Natural killer cell (primary cell): ENCODE measurements at regions of chr1 and their contacts with region 1.

Region 1: DNA sequence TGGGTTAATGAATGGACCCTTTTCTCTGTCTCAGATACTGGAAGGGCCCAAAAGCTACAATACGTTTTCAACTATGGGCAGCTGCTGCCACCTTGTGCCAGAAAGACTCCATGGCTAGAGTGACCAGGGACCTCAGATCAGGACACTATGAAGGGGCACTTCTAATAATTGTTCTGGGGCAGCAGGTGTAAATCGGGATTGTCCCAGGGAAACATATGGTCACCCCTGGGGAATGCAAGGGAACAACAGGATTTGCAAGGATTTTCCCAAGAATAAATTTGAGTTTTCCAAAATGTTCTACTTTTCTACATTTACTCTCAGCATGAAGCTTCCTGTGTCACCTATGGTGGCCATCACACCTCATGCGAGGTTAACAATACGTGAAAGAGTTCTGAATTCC is 12.0 kb upstream of the FCAMR start:
- DNase-seq: peak; percentile 52 to 78
- ATAC-seq: peak; percentile 71 to 89 (median 86)
- H3K4me3 ChIP-seq: no peak overlapping the region
- H3K4me3 Mint-ChIP-seq: no peak overlapping the region
- H3K27ac ChIP-seq: no peak overlapping the region
- H3K27ac Mint-ChIP-seq: no peak overlapping the region
- H3K4me1 ChIP-seq: no peaks in the 10 kb centered on the region
- H3K4me1 Mint-ChIP-seq: no peaks in the 10 kb centered on the region
- H3K27me3 ChIP-seq: no peaks in the 10 kb centered on the region
- H3K27me3 Mint-ChIP-seq: peaks cover 24 to 31% of the 10 kb centered on the region in 2 donors
- CTCF ChIP-seq: peak; percentile 66

Region 2: GRCh38 chr1:206635080-206635977 is 346.9 kb before region 1 on chr1 and contains the start of gene DYRK3:
- intact Hi-C with region 1: loop called (anchors 1 kb)
- DNase-seq: peak; percentile 78 to 94
- ATAC-seq: peak; percentile 94 to 96 (median 95)
- H3K4me3 ChIP-seq: peak within 1 kb of the TSS; percentile 48
- H3K4me3 Mint-ChIP-seq: peak within 1 kb of the TSS; percentile 92
- H3K27ac ChIP-seq: no peak within 1 kb of the TSS
- H3K27ac Mint-ChIP-seq: peak within 1 kb of the TSS; percentile 56 to 79
- H3K4me1 ChIP-seq: peaks cover 17% of the 10 kb centered on the region
- H3K4me1 Mint-ChIP-seq: peaks cover 10 to 21% of the 10 kb centered on the region in 2 donors
- H3K27me3 ChIP-seq: peaks cover 8% of the 10 kb centered on the region
- H3K27me3 Mint-ChIP-seq: peaks cover 20 to 31% of the 10 kb centered on the region in 2 donors
- CTCF ChIP-seq: no peak
- total RNA-seq, gene DYRK3: 0.16 to 0.66 (median 0.43) TPM

Region 3: GRCh38 chr1:206725109-206725963 is 256.9 kb before region 1 on chr1:
- intact Hi-C with region 1: loop called (anchors 2 kb)
- DNase-seq: peak; percentile 55 to 82
- ATAC-seq: peak; percentile 36 to 54 (median 54)
- H3K4me3 ChIP-seq: no peak overlapping the region
- H3K4me3 Mint-ChIP-seq: no peak overlapping the region
- H3K27ac ChIP-seq: no peak overlapping the region
- H3K27ac Mint-ChIP-seq: no peak overlapping the region
- H3K4me1 ChIP-seq: peaks cover 67% of the 10 kb centered on the region
- H3K4me1 Mint-ChIP-seq: peaks cover 63 to 83% of the 10 kb centered on the region in 2 donors
- H3K27me3 ChIP-seq: no peaks in the 10 kb centered on the region
- H3K27me3 Mint-ChIP-seq: no peaks in the 10 kb centered on the region
- CTCF ChIP-seq: peak; percentile 55

Region 4: GRCh38 chr1:206734499-206735142 is 247.6 kb before region 1 on chr1:
- intact Hi-C with region 1: loop called (anchors 2 kb)
- DNase-seq: peak; percentile 74 to 90
- ATAC-seq: peak; percentile 49 to 63 (median 63)
- H3K4me3 ChIP-seq: no peak overlapping the region
- H3K4me3 Mint-ChIP-seq: peak overlapping the region; percentile 17
- H3K27ac ChIP-seq: no peak overlapping the region
- H3K27ac Mint-ChIP-seq: peak overlapping the region; percentile 66 to 92
- H3K4me1 ChIP-seq: peaks cover 66% of the 10 kb centered on the region
- H3K4me1 Mint-ChIP-seq: peaks cover 63 to 68% of the 10 kb centered on the region in 2 donors
- H3K27me3 ChIP-seq: no peaks in the 10 kb centered on the region
- H3K27me3 Mint-ChIP-seq: no peaks in the 10 kb centered on the region
- CTCF ChIP-seq: peak; percentile 84

Region 5: DNA sequence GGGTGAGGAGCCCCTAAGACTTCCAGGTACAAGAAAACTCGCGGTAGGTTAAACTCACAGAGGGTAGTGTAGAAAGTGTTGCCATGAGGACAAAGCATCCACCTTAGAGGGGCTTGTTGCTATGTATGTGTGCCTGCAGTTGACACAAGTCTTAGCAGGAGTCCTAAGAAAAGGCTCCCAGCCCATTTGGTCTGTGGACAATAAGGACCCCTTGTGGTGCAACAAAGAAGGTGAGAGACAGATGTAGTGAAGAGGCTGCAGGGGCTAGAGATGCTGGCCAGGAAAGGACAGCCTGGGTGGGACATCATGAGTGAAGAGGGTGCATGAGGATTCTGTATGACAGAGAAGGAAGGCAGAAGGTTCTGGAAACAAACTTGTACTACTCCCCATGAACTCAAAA is 173.6 kb before region 1 on chr1:
- intact Hi-C with region 1: loop called (anchors 1 kb)
- DNase-seq: peak in 1 of 2 donors; percentile 85
- ATAC-seq: peak; percentile 73 to 89 (median 86)
- H3K4me3 ChIP-seq: no peak overlapping the region
- H3K4me3 Mint-ChIP-seq: no peak overlapping the region
- H3K27ac ChIP-seq: no peak overlapping the region
- H3K27ac Mint-ChIP-seq: no peak overlapping the region
- H3K4me1 ChIP-seq: peaks cover 6% of the 10 kb centered on the region
- H3K4me1 Mint-ChIP-seq: peaks cover 0 to 12% of the 10 kb centered on the region in 2 donors
- H3K27me3 ChIP-seq: no peaks in the 10 kb centered on the region
- H3K27me3 Mint-ChIP-seq: peaks cover 8 to 26% of the 10 kb centered on the region in 2 donors
- CTCF ChIP-seq: peak; percentile 42

Region 6: GRCh38 chr1:206865013-206865671 is 117.1 kb before region 1 on chr1 and contains the start of gene IL20:
- intact Hi-C with region 1: loop called (anchors 1 kb)
- DNase-seq: peak; percentile 79 to 93
- ATAC-seq: peak; percentile 84 to 96 (median 95)
- H3K4me3 ChIP-seq: no peak within 1 kb of the TSS
- H3K4me3 Mint-ChIP-seq: no peak within 1 kb of the TSS
- H3K27ac ChIP-seq: no peak within 1 kb of the TSS
- H3K27ac Mint-ChIP-seq: no peak within 1 kb of the TSS
- H3K4me1 ChIP-seq: no peaks in the 10 kb centered on the region
- H3K4me1 Mint-ChIP-seq: peaks cover 0 to 6% of the 10 kb centered on the region in 2 donors
- H3K27me3 ChIP-seq: no peaks in the 10 kb centered on the region
- H3K27me3 Mint-ChIP-seq: peaks cover 23 to 47% of the 10 kb centered on the region in 2 donors
- CTCF ChIP-seq: peak; percentile 94
- total RNA-seq, gene IL20: not detected

Region 7: GRCh38 chr1:206912445-206913095 is 69.6 kb before region 1 on chr1:
- intact Hi-C with region 1: loop called (anchors 5 kb)
- DNase-seq: peak; percentile 51 to 88
- ATAC-seq: peak; percentile 72 to 80 (median 77)
- H3K4me3 ChIP-seq: no peak overlapping the region
- H3K4me3 Mint-ChIP-seq: peak overlapping the region; percentile 25
- H3K27ac ChIP-seq: peak overlapping the region; percentile 40
- H3K27ac Mint-ChIP-seq: peak overlapping the region in 1 of 2 donors; percentile 77
- H3K4me1 ChIP-seq: peaks cover 73% of the 10 kb centered on the region
- H3K4me1 Mint-ChIP-seq: peaks cover 84% of the 10 kb centered on the region in 2 donors
- H3K27me3 ChIP-seq: no peaks in the 10 kb centered on the region
- H3K27me3 Mint-ChIP-seq: no peaks in the 10 kb centered on the region
- CTCF ChIP-seq: peak; percentile 91

Region 8: DNA sequence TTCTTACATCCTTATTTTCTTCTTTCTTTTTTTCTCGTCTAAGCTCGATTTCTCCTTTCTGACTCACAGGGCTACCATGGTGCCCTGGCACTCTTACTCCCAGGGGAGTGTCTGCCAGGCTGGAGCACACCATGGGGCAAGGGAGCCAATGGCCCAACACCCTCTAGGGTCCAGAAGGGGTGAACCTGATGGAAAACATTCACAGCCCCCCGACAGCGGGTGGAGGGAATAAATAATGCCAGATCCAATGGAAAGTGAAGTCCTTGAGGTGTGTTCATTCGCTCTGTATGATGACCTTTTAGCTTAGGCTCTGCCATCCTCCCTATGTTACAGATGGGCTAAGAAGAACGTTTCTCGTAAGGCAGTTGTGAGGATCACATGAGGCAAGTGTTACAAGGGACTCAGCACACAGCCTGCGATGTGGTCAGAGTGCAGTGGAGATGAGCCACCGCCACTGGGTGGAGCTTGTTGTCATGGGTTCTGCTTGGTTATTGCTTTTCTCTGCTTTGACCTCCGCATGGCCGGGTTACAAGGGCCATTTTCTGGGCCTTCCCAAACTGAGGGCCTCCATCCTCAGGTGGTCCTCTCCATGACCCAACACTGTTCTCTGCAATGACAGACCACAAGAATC is 57.0 kb before region 1 on chr1:
- intact Hi-C with region 1: no loop called
- DNase-seq: peak; percentile 80 to 84
- ATAC-seq: peak; percentile 68 to 86 (median 85)
- H3K4me3 ChIP-seq: no peak overlapping the region
- H3K4me3 Mint-ChIP-seq: no peak overlapping the region
- H3K27ac ChIP-seq: peak overlapping the region; percentile 93
- H3K27ac Mint-ChIP-seq: no peak overlapping the region
- H3K4me1 ChIP-seq: peaks cover 78% of the 10 kb centered on the region
- H3K4me1 Mint-ChIP-seq: peaks cover 9 to 17% of the 10 kb centered on the region in 2 donors
- H3K27me3 ChIP-seq: no peaks in the 10 kb centered on the region
- H3K27me3 Mint-ChIP-seq: no peaks in the 10 kb centered on the region
- CTCF ChIP-seq: no peak